ENCODE measurements at regions of chr1 and their contacts with region 1.

Region 1: DNA sequence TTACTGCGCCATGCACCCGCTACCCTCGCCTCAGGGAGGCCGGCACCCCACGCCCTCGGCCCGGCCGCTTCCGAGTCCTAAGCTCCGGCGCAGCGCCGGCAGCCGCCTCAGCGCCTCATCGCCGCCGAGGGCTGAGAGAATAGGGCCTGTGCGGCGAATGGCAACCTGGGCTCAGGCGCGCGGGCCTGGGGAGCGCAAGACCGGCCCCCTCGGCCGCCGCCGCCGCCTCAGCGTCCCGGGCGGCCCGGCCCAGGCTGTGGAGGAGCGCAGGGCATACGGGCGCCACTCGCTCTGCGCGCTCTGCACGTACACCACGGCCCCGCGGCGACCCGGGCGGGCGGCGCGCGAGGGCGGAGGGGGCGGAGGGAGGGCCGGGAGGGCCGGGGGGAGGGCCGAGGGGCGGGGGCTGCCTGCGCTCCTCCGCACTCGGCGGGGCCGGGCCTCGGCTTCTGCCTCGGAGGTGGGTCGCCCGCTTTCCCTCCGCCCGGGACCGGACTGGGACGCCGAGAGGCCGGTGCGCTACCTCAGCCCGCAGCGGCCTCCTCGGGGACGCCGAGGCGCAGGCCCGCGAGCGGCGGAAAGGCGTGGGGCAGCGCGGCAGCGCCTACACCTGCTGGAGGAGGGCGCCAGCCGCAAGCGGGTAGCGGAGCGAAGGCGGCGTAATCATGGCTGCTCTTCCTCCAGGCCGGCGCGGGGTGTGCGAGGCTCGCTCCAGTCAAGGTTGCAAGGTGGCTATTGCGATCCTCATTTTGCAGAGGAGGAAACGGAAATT is at the start of gene EGLN1:
- DNase-seq: peak; percentile 23 to 90
- H3K4me3 ChIP-seq: peak within 1 kb of the TSS; percentile 86 to 100
- H3K27ac ChIP-seq: peak within 1 kb of the TSS; percentile 97 to 100
- H3K4me1 ChIP-seq: peaks cover 0 to 6% of the 10 kb centered on the region in 2 donors
- H3K27me3 ChIP-seq: no peaks in the 10 kb centered on the region
- CTCF ChIP-seq: peak; percentile 21 to 39 (median 24)
- total RNA-seq, gene EGLN1: 47.8 TPM

Region 2: GRCh38 chr1:231240883-231241735 is 181.1 kb before region 1 on chr1 and contains the start of gene GNPAT:
- intact Hi-C with region 1: loop called (anchors 5 kb)
- DNase-seq: peak; percentile 23 to 92
- H3K4me3 ChIP-seq: peak within 1 kb of the TSS; percentile 85 to 90
- H3K27ac ChIP-seq: peak within 1 kb of the TSS; percentile 82 to 84
- H3K4me1 ChIP-seq: peaks cover 0 to 18% of the 10 kb centered on the region in 2 donors
- H3K27me3 ChIP-seq: no peaks in the 10 kb centered on the region
- CTCF ChIP-seq: no peak
- total RNA-seq, gene GNPAT: 34.8 TPM

Region 3: GRCh38 chr1:231337472-231338269 is 84.5 kb before region 1 on chr1 and contains the start of gene EXOC8:
- intact Hi-C with region 1: loop called (anchors 2 kb)
- DNase-seq: peak; percentile 82 to 98
- H3K4me3 ChIP-seq: peak within 1 kb of the TSS; percentile 81 to 90
- H3K27ac ChIP-seq: peak within 1 kb of the TSS; percentile 92 to 97
- H3K4me1 ChIP-seq: peaks cover 8 to 40% of the 10 kb centered on the region in 2 donors
- H3K27me3 ChIP-seq: no peaks in the 10 kb centered on the region
- CTCF ChIP-seq: no peak
- total RNA-seq, gene EXOC8: 9.9 TPM

Region 4: DNA sequence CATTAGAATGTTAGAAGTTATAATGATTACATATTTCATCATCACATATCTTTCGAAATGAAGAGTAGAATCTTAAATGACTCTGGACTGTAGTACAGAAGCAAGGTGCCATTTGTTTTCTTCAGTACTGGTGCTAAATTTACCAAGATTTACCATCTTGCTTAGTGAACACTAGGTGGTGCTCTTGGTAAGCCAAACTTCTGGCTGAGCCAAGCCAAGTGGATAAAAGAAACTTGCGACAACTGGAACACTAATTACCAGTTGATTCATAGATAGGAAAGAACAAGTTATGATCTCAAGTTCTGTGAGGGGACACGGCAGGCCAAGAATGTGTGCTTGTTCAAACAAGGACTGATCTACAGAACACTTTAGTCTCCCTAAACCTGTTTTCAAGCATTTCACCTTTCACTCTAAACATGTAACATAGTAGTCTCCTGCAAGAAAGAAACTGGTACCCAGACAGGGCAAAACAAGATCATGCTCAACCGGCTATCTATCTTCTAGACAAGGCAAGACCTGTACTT is 64.3 kb before region 1 on chr1:
- intact Hi-C with region 1: loop called (anchors 1 kb)
- DNase-seq: peak in 1 of 2 donors; percentile 70
- H3K4me3 ChIP-seq: no peak overlapping the region
- H3K27ac ChIP-seq: peak overlapping the region in 1 of 2 donors; percentile 31
- H3K4me1 ChIP-seq: peaks cover 0 to 2% of the 10 kb centered on the region in 2 donors
- H3K27me3 ChIP-seq: no peaks in the 10 kb centered on the region
- CTCF ChIP-seq: peak; percentile 63 to 76 (median 71)

Region 5: GRCh38 chr1:231387770-231388669 is 34.2 kb before region 1 on chr1:
- intact Hi-C with region 1: loop called (anchors 5 kb)
- DNase-seq: no peak
- H3K4me3 ChIP-seq: no peak overlapping the region
- H3K27ac ChIP-seq: no peak overlapping the region
- H3K4me1 ChIP-seq: peaks cover 0 to 5% of the 10 kb centered on the region in 2 donors
- H3K27me3 ChIP-seq: no peaks in the 10 kb centered on the region
- CTCF ChIP-seq: no peak

Region 6: DNA sequence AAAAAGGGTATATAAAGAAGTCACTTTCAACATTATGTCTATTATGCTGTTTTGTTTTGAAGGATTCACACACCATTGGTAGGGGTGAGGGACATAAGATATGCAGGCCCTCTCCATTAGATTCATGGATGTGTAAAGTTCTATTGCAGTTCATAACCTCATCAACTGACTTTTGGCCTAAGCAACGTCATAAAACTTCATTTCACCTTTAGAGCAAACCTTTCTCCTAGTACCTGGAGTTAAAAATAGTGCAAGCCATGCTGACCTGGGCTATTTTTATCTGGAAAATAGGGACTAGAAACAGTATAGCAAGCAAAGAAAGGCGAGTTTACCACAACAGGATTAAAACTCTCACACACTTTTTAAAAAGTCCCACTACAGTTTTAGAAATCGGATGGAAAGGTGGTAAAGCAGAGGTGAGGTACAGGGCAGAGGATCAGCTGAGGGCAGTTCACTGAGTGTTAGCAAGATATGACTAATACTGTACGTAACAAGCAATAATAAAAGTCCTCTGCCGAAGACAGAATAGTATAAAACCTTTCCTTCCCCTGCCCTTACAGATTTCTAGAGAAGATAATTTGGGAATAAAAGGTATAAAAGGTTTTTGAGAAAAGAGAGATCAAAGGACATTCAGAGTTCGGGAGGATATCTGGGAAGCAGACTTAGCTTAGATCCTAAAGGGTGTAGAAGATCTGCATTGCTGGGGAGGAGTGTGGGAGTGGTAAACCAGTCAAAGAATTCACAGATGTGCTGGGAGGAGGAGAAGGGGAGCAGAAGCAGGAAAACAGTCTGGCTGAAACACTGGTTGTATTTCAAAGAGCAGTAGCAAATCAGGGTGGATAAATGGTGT is 14.4 kb before region 1 on chr1:
- intact Hi-C with region 1: loop called (anchors 2 kb)
- DNase-seq: no peak
- H3K4me3 ChIP-seq: no peak overlapping the region
- H3K27ac ChIP-seq: peak overlapping the region; percentile 39 to 69
- H3K4me1 ChIP-seq: peaks cover 0 to 32% of the 10 kb centered on the region in 2 donors
- H3K27me3 ChIP-seq: no peaks in the 10 kb centered on the region
- CTCF ChIP-seq: no peak

Region 7: GRCh38 chr1:231478800-231479199 is 56.6 kb after region 1 on chr1:
- intact Hi-C with region 1: no loop called
- DNase-seq: no peak
- H3K4me3 ChIP-seq: no peak overlapping the region
- H3K27ac ChIP-seq: no peak overlapping the region
- H3K4me1 ChIP-seq: no peaks in the 10 kb centered on the region
- H3K27me3 ChIP-seq: no peaks in the 10 kb centered on the region
- CTCF ChIP-seq: no peak

Region 8: DNA sequence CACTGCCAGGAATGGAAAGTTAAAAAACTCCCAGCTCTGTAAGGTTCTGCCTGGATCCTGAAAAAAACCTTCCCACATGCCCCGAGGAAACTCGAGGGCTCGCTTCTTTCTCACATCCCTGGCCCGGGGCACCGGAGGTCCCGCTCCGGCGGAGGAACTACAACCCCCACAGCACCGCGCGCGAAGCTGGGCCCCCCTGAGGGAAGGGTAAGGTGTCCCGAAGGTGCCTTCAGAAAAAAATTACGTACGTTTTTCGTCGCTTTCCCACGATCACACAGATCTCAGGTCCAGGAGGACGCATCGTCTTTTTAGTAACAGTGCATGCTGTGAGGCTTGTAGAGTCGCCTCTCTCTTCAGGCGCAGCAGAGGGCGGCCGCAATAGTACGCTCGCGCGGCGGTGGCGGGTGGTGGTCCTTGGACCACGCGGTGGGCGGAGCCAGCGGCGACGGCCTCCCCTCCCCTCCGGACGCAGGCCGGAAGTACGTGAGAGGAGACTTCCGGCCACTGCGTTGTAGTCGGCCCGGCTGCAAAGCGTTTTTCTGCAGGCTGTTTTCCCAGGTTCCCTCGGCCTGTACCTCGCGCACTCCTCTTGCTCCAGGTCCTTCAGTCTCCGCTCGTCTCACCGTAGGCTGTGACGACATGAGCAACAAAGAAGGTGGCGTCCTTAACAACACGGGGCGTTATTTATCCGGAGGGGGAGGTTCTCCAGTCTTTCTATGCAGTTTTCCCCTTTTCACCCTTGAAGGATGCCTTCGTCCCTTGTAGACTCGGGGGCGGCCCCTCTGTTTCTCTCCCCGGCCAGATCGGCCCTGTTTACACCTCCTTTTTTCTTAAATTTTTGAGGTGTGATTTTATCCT is 106.2 kb after region 1 on chr1 and contains the start of gene TSNAX:
- intact Hi-C with region 1: loop called (anchors 1 kb)
- DNase-seq: peak; percentile 54 to 94
- H3K4me3 ChIP-seq: peak within 1 kb of the TSS; percentile 81 to 95
- H3K27ac ChIP-seq: peak within 1 kb of the TSS; percentile 85 to 98
- H3K4me1 ChIP-seq: peaks cover 0 to 22% of the 10 kb centered on the region in 2 donors
- H3K27me3 ChIP-seq: no peaks in the 10 kb centered on the region
- CTCF ChIP-seq: no peak
- total RNA-seq, gene TSNAX: 15.0 TPM

Measured in ascending aorta (tissue), 2 donors.